MCF 10A (cell line): ENCODE measurements at regions of chr22 and their contacts with region 1.

Region 1: GRCh38 chr22:26364066-26365015 is 64.7 kb upstream of the ASPHD2 start:
- DNase-seq: peak; percentile 73
- H3K4me3 Mint-ChIP-seq: no peak overlapping the region
- H3K27ac Mint-ChIP-seq: no peak overlapping the region
- H3K4me1 Mint-ChIP-seq: peaks cover 10% of the 10 kb centered on the region
- H3K27me3 Mint-ChIP-seq: peaks cover 14% of the 10 kb centered on the region
- CTCF ChIP-seq: peak; percentile 51

Region 2: DNA sequence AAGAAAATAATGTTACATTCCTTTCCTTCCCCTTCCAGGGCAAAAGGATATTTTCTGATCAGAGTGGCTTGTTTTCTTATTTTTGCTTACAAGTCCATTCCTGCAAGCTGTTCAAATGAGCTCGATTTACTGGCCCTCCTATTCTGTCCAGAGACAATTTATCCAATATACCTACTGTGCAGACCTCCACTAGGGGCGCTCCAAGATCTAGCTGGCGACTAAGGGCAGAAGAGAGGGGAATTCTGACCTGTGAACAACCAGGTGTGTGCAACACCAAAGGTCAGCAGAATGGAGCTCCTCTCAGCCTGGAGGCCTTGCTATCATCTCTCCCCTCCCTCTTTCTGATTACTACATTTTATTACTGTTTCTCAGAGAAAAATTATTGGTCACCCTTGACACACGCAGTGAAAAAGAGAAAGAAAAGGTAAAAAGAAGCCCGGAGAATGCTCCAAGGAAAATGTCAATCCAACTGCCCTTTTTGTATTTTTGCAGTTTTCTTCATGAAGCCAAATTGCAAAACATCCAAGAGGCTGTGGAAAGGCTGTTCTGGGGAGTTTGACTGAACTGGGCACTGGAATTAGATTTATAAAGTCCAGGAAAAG is 191.9 kb before region 1 on chr22:
- CTCF ChIA-PET with region 1: interaction called, 3 read pairs
- POLR2A ChIA-PET with region 1: interaction called, 3 read pairs
- intact Hi-C with region 1: loop called (anchors 1 kb)
- DNase-seq: peak; percentile 18
- H3K4me3 Mint-ChIP-seq: no peak overlapping the region
- H3K27ac Mint-ChIP-seq: no peak overlapping the region
- H3K4me1 Mint-ChIP-seq: no peaks in the 10 kb centered on the region
- H3K27me3 Mint-ChIP-seq: peaks cover 23% of the 10 kb centered on the region
- CTCF ChIP-seq: peak; percentile 54

Region 3: DNA sequence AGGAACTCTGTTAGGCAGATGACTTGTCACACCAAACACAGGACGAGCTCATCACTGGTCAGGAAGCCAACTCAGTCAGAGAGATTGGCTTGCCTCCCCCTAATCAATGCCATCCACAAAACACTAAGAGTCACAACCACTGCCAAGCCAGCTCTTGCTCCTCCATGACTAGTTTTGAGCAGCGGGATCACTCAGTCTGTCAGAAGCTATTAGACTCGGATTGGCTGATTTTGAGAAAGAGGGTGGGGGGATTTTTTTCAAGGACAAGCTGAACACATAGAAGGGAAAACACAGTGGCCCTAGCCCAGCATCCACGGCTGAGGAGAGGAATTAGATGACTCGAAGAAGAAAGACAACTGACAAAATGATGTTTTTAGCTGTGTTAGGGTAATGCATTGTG is 139.1 kb before region 1 on chr22:
- CTCF ChIA-PET with region 1: no interaction called
- POLR2A ChIA-PET with region 1: no interaction called
- intact Hi-C with region 1: no loop called
- DNase-seq: no peak
- H3K4me3 Mint-ChIP-seq: no peak overlapping the region
- H3K27ac Mint-ChIP-seq: no peak overlapping the region
- H3K4me1 Mint-ChIP-seq: no peaks in the 10 kb centered on the region
- H3K27me3 Mint-ChIP-seq: peaks cover 21% of the 10 kb centered on the region
- CTCF ChIP-seq: no peak

Region 4: GRCh38 chr22:26377170-26377830 is 13.0 kb after region 1 on chr22:
- CTCF ChIA-PET with region 1: interaction called, 192 read pairs
- POLR2A ChIA-PET with region 1: no interaction called
- intact Hi-C with region 1: no loop called
- DNase-seq: no peak
- H3K4me3 Mint-ChIP-seq: no peak overlapping the region
- H3K27ac Mint-ChIP-seq: no peak overlapping the region
- H3K4me1 Mint-ChIP-seq: no peaks in the 10 kb centered on the region
- H3K27me3 Mint-ChIP-seq: peaks cover 89% of the 10 kb centered on the region
- CTCF ChIP-seq: no peak

Region 5: GRCh38 chr22:26398741-26399153 is 34.4 kb after region 1 on chr22:
- CTCF ChIA-PET with region 1: interaction called, 14 read pairs
- POLR2A ChIA-PET with region 1: interaction called, 3 read pairs
- intact Hi-C with region 1: no loop called
- DNase-seq: peak; percentile 78
- H3K4me3 Mint-ChIP-seq: no peak overlapping the region
- H3K27ac Mint-ChIP-seq: no peak overlapping the region
- H3K4me1 Mint-ChIP-seq: peaks cover 5% of the 10 kb centered on the region
- H3K27me3 Mint-ChIP-seq: peaks cover 29% of the 10 kb centered on the region
- CTCF ChIP-seq: peak; percentile 81

Region 6: GRCh38 chr22:26665813-26666231 is 301.5 kb after region 1 on chr22:
- CTCF ChIA-PET with region 1: interaction called, 19 read pairs
- POLR2A ChIA-PET with region 1: interaction called, 3 read pairs
- intact Hi-C with region 1: loop called (anchors 1 kb)
- DNase-seq: no peak
- H3K4me3 Mint-ChIP-seq: no peak overlapping the region
- H3K27ac Mint-ChIP-seq: no peak overlapping the region
- H3K4me1 Mint-ChIP-seq: peaks cover 8% of the 10 kb centered on the region
- H3K27me3 Mint-ChIP-seq: no peaks in the 10 kb centered on the region
- CTCF ChIP-seq: no peak